ENCODE measurements at regions of chr17 and their contacts with region 1.

Region 1: DNA sequence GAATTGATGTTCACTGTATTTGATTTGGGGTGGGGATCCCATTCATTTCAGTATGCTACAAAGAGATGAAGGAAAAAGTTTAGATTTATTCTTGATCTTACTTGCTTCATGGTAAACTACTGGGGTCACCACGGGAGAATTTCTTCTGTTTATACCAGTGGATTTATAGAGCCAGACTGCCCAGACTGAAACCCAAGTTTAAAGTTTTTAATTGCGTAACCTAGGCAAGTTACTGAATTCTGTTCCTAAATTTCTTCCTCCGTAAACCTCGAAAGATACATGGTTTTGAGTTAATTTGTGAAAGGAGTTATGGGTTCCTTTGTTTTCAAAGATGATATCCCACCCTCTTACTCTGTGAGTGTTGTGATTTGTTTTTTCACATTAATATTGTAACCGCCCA is 26.4 kb downstream of the PIGL start:
- DNase-seq: no peak
- ATAC-seq: no peak
- H3K4me3 ChIP-seq: no peak overlapping the region
- H3K4me3 Mint-ChIP-seq: no peak overlapping the region
- H3K27ac ChIP-seq: no peak overlapping the region
- H3K27ac Mint-ChIP-seq: no peak overlapping the region
- H3K4me1 ChIP-seq: no peaks in the 10 kb centered on the region
- H3K4me1 Mint-ChIP-seq: peaks cover 0 to 15% (median 6%) of the 10 kb centered on the region in 3 donors
- H3K27me3 ChIP-seq: no peaks in the 10 kb centered on the region
- H3K27me3 Mint-ChIP-seq: no peaks in the 10 kb centered on the region

Region 2: DNA sequence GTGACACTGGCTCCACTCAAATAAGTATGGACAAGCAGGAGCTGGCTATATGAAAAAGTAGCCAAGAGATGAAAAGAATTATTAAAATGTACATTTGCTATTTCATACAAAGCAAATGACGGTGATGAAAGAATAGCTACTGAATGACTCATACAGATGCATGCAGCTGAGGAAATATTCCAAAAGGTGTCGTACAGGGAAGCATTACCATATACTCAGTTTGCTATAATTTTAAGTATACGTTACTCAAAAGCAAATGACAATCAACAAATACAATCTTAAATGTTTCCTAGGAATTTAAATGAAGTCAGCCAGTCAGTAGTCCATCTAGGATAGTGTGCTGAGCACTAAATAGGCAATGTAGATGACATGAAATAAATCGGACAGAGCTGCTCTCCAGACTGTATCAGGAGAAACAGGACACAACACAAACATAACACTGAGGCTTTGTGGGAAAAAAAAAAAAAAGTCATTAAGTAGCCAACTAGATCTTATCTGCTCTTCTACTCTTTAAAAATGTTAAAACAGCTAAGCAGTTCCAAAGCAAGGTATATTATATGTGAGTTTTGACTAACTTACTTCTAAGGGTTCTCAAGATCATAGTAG is 93.0 kb before region 1 on chr17:
- CTCF ChIA-PET with region 1: no interaction called
- POLR2A ChIA-PET with region 1: interaction called in 1 of 2 experiments, 11 read pairs
- DNase-seq: no peak
- ATAC-seq: no peak
- H3K4me3 ChIP-seq: no peak overlapping the region
- H3K4me3 Mint-ChIP-seq: no peak overlapping the region
- H3K27ac ChIP-seq: no peak overlapping the region
- H3K27ac Mint-ChIP-seq: no peak overlapping the region
- H3K4me1 ChIP-seq: no peaks in the 10 kb centered on the region
- H3K4me1 Mint-ChIP-seq: no peaks in the 10 kb centered on the region
- H3K27me3 ChIP-seq: no peaks in the 10 kb centered on the region
- H3K27me3 Mint-ChIP-seq: no peaks in the 10 kb centered on the region

Region 3: GRCh38 chr17:16215273-16215964 is 28.0 kb before region 1 on chr17 and contains the start of gene NCOR1:
- CTCF ChIA-PET with region 1: no interaction called
- POLR2A ChIA-PET with region 1: no interaction called
- DNase-seq: peak; percentile 73 to 92 (median 83)
- ATAC-seq: peak; percentile 87 to 90 (median 88)
- H3K4me3 ChIP-seq: peak within 1 kb of the TSS; percentile 73 to 82
- H3K4me3 Mint-ChIP-seq: peak within 1 kb of the TSS; percentile 88 to 97 (median 89)
- H3K27ac ChIP-seq: peak within 1 kb of the TSS; percentile 70
- H3K27ac Mint-ChIP-seq: peak within 1 kb of the TSS; percentile 86 to 97
- H3K4me1 ChIP-seq: peaks cover 28 to 35% of the 10 kb centered on the region in 2 experiments
- H3K4me1 Mint-ChIP-seq: peaks cover 49 to 58% (median 55%) of the 10 kb centered on the region in 3 donors
- H3K27me3 ChIP-seq: no peaks in the 10 kb centered on the region
- H3K27me3 Mint-ChIP-seq: no peaks in the 10 kb centered on the region
- total RNA-seq, gene NCOR1: 134 to 173 (median 152) TPM

Measured in T-cell (primary cell).